Activated T-helper 2 cell treated with anti-CD3 and anti-CD28 coated beads, Interferon-gamma antibody, Interleukin-2, Interleukin-4, amounts not matched to agents 10 μg/mL and 5 μg/mL and 100 μg/mL, durations not matched to agents 14 hours and 24 hours and 36 hours (primary cell): ENCODE measurements at regions of chr11 and their contacts with region 1.

Region 1: DNA sequence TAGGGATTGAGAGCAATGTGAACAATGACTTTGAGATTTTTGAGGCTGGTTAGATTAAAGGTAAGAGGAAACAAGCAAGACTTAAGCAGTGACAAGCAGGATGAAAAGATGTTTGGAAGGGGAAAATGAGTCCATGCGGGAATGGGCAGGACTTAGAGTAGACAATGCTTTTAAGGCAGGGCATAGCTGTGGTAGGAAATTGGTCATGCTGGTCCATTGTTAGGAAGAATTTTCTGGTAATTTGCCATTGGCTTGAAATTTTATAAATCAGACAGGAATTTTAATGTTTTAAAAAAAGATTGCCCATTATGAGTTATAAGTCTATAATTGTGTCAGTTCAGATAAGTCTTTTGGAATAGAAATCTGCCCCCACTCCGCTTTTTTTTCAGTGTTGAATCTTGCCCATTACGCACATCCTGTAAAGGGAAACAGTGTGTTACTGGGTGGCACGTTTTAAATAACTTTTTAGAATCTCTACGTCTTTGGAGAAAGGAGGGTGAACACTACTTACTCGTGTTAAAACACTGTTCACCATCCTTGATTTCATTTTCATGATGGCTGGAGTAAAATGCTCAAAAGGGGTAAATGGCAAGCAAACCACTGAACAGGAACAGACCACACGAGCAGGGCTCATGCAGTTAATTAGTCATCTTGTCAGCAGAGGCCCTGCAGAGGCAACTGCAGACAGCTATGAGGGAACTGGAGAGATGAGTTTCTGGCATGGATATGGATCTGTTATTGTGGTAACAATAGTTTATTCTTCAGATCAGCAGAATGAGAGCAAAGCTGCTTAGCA is 25.0 kb downstream of the SWAP70 start:
- DNase-seq: no peak
- H3K4me3 Mint-ChIP-seq: no peak overlapping the region
- H3K27ac Mint-ChIP-seq: no peak overlapping the region
- H3K4me1 Mint-ChIP-seq: no peaks in the 10 kb centered on the region
- H3K27me3 Mint-ChIP-seq: peaks cover 1% of the 10 kb centered on the region

Region 2: DNA sequence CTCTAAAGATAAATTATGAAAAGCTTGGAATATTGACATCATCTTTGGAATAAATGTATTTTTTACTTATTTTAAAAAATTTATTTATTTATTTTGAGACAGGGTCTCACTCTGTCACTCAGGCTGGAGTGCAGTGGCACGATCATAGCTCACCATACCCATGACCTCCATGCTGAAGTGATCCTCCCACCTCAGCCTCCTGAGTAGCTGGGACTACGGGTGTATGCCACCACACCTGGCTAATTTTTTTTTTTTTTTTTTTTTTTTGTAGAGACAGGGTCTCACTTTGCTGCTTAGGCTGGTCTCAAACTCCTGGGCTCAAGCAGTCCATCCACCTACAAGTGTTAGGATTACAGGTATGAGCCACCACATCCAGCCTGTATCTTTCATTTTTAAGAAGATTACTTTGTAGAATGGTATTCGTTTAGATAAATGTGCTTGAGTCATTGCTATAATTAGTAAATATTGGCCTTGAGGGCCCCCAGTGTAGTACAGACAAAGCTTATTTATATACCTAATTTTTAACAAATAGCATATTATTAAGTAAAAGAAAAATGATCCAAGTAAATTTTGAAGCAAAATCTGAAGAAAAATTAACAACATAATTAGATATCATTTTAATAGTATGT is 16.5 kb before region 1 on chr11:
- intact Hi-C with region 1: loop called (anchors 2 kb)
- DNase-seq: no peak
- H3K4me3 Mint-ChIP-seq: no peak overlapping the region
- H3K27ac Mint-ChIP-seq: no peak overlapping the region
- H3K4me1 Mint-ChIP-seq: no peaks in the 10 kb centered on the region
- H3K27me3 Mint-ChIP-seq: peaks cover 6% of the 10 kb centered on the region